Activated CD8-positive, alpha-beta T cell treated with anti-CD3 and anti-CD28 coated beads, Interleukin-2, amount 10 ng/mL, durations not matched to agents 7 days and 5 days (primary cell): ENCODE measurements at regions of chr1 and their contacts with region 1.

Region 1: GRCh38 chr1:110787328-110788071 is 85.4 kb upstream of the CD53 start:
- DNase-seq: peak; percentile 87
- ATAC-seq: peak; percentile 81
- H3K4me3 Mint-ChIP-seq: peak overlapping the region; percentile 66
- H3K27ac Mint-ChIP-seq: peak overlapping the region; percentile 95
- H3K4me1 Mint-ChIP-seq: peaks cover 73% of the 10 kb centered on the region
- H3K27me3 Mint-ChIP-seq: no peaks in the 10 kb centered on the region

Region 2: GRCh38 chr1:110674337-110675059 is 113.0 kb before region 1 on chr1 and contains the start of gene KCNA3:
- CTCF ChIA-PET with region 1: interaction called, 15 read pairs
- POLR2A ChIA-PET with region 1: interaction called, 17 read pairs
- DNase-seq: peak; percentile 77
- ATAC-seq: peak; percentile 43
- H3K4me3 Mint-ChIP-seq: peak within 1 kb of the TSS; percentile 95
- H3K27ac Mint-ChIP-seq: peak within 1 kb of the TSS; percentile 91
- H3K4me1 Mint-ChIP-seq: peaks cover 33% of the 10 kb centered on the region
- H3K27me3 Mint-ChIP-seq: no peaks in the 10 kb centered on the region
- total RNA-seq, gene KCNA3: 49.0 to 49.3 TPM

Region 3: GRCh38 chr1:110816930-110817329 is 29.4 kb after region 1 on chr1:
- CTCF ChIA-PET with region 1: interaction called, 15 read pairs
- POLR2A ChIA-PET with region 1: interaction called, 6 read pairs
- DNase-seq: no peak
- ATAC-seq: no peak
- H3K4me3 Mint-ChIP-seq: no peak overlapping the region
- H3K27ac Mint-ChIP-seq: no peak overlapping the region
- H3K4me1 Mint-ChIP-seq: no peaks in the 10 kb centered on the region
- H3K27me3 Mint-ChIP-seq: peaks cover 19% of the 10 kb centered on the region

Region 4: GRCh38 chr1:110879758-110880606 is 92.5 kb after region 1 on chr1:
- CTCF ChIA-PET with region 1: interaction called, 34 read pairs
- POLR2A ChIA-PET with region 1: interaction called, 117 read pairs
- DNase-seq: peak; percentile 84
- ATAC-seq: peak; percentile 57
- H3K4me3 Mint-ChIP-seq: peak overlapping the region; percentile 79
- H3K27ac Mint-ChIP-seq: peak overlapping the region; percentile 100
- H3K4me1 Mint-ChIP-seq: peaks cover 74% of the 10 kb centered on the region
- H3K27me3 Mint-ChIP-seq: no peaks in the 10 kb centered on the region

Region 5: DNA sequence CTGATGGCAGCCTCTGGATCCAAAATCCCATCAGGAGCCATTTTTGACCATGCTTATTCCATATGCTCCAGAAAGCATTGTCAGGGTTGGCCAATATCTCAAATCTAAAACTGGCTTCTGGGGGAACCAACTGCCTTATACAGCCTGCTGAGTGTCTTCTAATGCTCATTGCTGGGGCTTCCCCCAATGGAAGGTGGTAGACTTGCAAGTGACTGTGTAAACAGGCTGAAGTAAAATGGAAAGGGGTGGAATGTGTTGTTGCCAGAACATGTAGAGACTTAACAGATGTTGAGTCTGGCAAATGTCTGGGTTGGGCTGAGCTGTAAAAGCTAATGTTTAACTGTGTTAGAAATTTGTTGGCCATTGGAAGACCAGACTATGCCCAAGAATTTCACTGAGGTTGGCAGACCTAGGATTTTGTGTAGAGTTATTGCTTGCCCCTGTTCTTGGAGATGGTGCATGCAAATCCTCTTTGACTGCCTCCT is 198.9 kb after region 1 on chr1:
- CTCF ChIA-PET with region 1: interaction called, 37 read pairs
- POLR2A ChIA-PET with region 1: interaction called, 3 read pairs
- DNase-seq: no peak
- ATAC-seq: no peak
- H3K4me3 Mint-ChIP-seq: no peak overlapping the region
- H3K27ac Mint-ChIP-seq: no peak overlapping the region
- H3K4me1 Mint-ChIP-seq: peaks cover 15% of the 10 kb centered on the region
- H3K27me3 Mint-ChIP-seq: peaks cover 9% of the 10 kb centered on the region